G401 (cell line): ENCODE measurements at regions of chr12 and their contacts with region 1.

Region 1: DNA sequence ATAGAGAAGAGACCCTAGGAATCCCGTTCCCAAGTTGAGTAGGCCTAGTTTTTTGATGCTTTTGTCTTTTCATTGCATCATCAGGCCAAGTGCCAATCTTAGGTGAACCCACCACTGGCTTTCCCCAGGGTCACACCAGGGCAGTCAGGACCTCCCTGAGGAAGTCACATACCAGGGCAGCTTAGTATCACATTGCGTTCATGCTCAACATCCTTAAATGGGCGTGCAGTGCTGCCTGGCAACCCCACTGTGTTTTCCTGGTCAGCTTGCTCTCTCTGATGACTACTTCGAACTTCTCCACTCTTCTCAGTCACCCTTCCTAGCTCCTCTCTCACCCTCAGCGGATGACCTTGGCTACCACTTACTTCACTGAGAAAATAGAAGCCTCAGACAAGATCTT is 9.0 kb downstream of the ASIC1 start:
- DNase-seq: no peak

Region 2: DNA sequence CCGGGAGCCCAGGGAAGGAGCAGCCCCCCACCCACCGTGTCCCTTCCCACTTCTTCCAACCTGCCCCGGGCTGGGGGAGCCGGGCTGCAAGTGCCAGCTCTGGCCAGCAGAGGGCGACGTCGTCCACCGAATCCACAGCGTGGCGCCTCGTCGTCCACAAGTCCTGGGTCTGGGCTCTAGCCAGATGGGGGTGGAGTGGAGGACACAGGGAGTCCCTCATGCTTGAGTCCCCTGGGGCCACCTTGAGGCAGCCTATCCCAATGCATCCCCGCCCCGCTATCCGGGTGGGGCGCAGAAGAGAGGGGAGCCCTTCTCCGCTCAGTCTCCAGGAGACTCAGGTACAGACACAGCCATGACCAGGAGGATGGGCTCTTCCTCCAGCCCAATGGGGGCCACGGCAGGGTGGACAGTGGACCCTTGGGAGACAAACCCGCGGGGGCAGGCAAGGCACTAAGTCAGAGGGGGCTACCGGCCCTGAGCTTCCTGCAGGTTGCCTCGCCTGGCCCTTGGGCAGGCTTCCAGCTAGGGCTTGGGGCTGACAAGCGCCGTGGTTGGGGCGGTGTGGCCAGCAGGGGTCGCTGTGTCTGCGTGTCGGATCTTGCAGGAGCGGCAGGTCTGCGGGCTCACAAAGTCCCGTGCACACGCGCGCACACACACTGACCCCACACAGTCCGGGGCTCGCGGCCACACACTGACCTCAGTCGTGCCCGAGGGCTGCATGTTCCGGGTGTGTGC is 99.2 kb before region 1 on chr12:
- in situ Hi-C with region 1: loop called (anchors 5 kb)
- DNase-seq: peak; percentile 81

Region 3: GRCh38 chr12:50162230-50162629 is 95.8 kb after region 1 on chr12:
- in situ Hi-C with region 1: no loop called
- DNase-seq: no peak